Activated CD4-positive, alpha-beta T cell treated with anti-CD3 and anti-CD28 coated beads for 36 hours (primary cell): ENCODE measurements at regions of chr18 and their contacts with region 1.

Region 1: DNA sequence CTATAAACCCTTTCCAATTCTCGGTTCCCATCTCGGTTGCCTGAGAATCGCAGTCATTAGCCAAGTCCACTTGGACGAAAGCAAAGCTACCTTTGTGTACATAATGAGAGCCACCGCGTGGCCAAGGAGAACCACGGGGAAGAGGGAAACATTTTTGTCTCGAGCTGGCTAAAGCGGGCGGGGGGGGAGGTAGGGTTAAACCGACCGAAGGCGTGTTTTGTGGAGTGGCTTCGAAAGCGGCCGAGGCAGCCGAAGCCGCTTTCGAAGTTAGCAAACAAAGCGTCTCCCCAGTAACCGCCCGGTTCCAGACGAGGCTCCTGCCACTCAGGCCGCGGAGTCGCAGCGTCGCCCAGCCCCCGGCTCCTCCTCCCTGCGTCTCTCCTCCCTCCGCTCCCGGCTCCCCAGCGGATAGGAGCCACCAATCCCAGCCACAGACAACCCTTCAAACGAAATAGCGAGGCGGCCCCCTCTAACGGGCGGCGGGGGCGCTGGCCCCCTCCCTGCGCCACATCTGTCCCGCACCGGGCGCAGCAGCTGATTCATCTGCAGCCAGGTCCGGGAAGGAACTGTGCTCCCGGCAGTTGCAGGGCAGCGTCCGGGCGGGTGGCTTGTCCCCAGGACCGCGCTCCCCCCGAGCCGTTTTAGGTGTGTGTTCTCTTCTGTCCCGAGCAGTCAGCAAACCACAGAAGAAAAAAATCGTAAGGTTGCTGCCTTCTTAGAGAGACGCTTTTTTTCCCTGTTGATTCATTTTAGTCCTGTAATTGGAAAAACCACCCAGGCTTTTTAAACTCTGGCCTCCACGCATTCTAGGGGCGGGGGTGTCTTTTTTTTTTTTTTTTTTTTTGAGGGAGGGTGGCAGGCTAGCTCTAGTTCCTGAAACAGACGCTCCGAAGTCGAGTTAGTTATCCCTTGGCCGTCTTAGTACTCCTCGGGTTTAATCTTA is 1.8 kb upstream of the TGIF1 start:
- DNase-seq: peak; percentile 94
- ATAC-seq: peak; percentile 69
- H3K4me3 Mint-ChIP-seq: peak overlapping the region; percentile 94
- H3K27ac Mint-ChIP-seq: peak overlapping the region; percentile 97
- H3K4me1 Mint-ChIP-seq: peaks cover 26% of the 10 kb centered on the region
- H3K27me3 Mint-ChIP-seq: no peaks in the 10 kb centered on the region

Region 2: DNA sequence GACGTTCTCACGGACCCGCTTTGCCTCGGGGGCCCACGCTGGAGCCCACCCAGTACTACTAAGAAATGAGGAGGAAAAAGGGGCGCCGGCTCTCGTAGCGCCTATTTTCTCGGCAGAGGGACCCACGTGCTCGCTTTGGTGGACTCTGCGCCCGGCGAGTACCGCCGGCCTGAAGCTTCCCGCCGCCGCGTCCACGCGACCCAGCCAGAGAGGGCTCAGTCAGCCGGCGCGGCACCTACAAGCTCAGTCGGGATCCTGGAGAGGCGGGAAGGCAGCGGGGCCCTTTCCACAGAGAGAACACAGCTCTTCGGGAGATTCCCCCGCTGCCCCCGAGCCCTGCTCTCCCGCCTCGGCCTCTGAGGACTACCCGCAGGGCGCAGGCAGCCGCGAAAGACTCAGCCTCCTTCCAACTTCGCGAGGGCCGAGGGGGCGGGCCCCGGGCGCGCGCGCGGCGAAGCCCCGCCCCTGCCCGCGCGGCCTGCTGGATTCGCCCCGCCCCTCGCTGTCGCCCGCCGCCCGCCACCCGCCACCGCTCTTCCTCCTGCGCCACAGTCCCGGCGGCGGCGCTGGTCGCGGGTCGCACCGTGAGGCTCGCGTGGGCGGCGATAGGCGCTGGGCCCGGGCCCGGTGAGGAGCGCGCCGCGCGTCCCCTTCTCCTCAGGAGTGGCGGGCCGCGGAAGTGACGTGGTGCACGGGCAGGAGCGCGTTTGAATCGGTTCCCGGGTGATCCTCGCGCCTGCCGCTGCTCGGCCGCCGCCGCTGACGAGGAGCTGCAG is 792.8 kb before region 1 on chr18 and contains the start of gene SMCHD1:
- CTCF ChIA-PET with region 1: interaction called, 3 read pairs
- POLR2A ChIA-PET with region 1: no interaction called
- intact Hi-C with region 1: loop called in 1 of 2 experiments (anchors 5 kb)
- DNase-seq: peak; percentile 97
- ATAC-seq: peak; percentile 78
- H3K4me3 Mint-ChIP-seq: peak within 1 kb of the TSS; percentile 95
- H3K27ac Mint-ChIP-seq: peak within 1 kb of the TSS; percentile 96
- H3K4me1 Mint-ChIP-seq: peaks cover 31% of the 10 kb centered on the region
- H3K27me3 Mint-ChIP-seq: no peaks in the 10 kb centered on the region
- total RNA-seq, gene SMCHD1: 89.5 to 121 TPM

Region 3: DNA sequence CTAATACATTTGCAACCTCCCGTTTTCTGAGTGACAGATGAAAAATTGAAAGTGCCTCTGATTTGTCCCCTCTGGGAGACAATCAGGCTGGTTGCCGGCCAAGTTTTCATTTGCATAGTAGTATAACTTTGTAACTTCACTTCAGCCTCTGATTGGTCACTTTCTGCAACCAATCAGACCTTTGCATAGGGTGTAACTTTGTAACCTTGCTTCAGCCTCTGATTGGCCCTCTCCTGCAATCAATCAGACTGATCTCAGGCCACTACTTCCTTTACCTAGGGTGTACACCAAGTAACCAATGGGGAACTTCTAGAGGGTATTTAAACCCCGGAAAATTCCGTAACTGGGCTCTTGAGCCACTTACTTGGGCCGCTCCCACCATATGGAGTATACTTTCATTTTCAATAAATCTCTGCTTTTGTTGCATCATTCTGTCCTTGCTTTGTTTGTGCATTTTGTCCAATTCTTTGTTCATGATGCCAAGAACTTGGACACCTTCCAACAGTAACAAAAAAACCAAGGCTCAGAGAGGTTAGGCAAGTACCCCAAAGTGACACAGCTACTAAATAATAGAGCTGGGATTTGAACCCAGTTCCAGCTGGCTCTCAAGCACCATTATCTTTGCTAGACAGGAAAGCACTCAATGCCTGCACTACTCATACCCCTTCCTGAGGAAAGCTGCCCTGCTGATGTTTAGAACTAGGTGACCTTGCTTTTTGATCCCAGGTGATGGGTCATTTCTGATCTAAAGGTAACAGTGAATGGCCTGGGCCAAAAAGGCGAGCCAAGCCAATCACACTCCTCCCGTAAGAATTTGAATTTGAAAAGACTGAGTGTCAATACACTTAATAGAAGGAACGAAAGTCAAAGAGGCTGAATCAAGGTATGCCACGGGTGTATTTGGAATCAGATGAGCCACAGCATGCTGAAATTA is 217.5 kb before region 1 on chr18:
- CTCF ChIA-PET with region 1: no interaction called
- POLR2A ChIA-PET with region 1: no interaction called
- intact Hi-C with region 1: no loop called
- DNase-seq: no peak
- ATAC-seq: peak; percentile 33
- H3K4me3 Mint-ChIP-seq: no peak overlapping the region
- H3K27ac Mint-ChIP-seq: no peak overlapping the region
- H3K4me1 Mint-ChIP-seq: peaks cover 2% of the 10 kb centered on the region
- H3K27me3 Mint-ChIP-seq: no peaks in the 10 kb centered on the region

Region 4: GRCh38 chr18:3261371-3262246 is 186.6 kb before region 1 on chr18 and contains the start of gene MYL12B:
- CTCF ChIA-PET with region 1: no interaction called
- POLR2A ChIA-PET with region 1: no interaction called
- intact Hi-C with region 1: loop called (anchors 1 to 5 kb)
- DNase-seq: peak; percentile 88
- ATAC-seq: peak; percentile 77
- H3K4me3 Mint-ChIP-seq: peak within 1 kb of the TSS; percentile 88
- H3K27ac Mint-ChIP-seq: peak within 1 kb of the TSS; percentile 96
- H3K4me1 Mint-ChIP-seq: peaks cover 59% of the 10 kb centered on the region
- H3K27me3 Mint-ChIP-seq: no peaks in the 10 kb centered on the region
- total RNA-seq, gene MYL12B: 282 to 301 TPM

Region 5: GRCh38 chr18:3321133-3321812 is 126.9 kb before region 1 on chr18:
- CTCF ChIA-PET with region 1: interaction called, 5 read pairs
- POLR2A ChIA-PET with region 1: no interaction called
- intact Hi-C with region 1: loop called (anchors 5 kb)
- DNase-seq: peak; percentile 54
- ATAC-seq: peak; percentile 38
- H3K4me3 Mint-ChIP-seq: no peak overlapping the region
- H3K27ac Mint-ChIP-seq: no peak overlapping the region
- H3K4me1 Mint-ChIP-seq: peaks cover 23% of the 10 kb centered on the region
- H3K27me3 Mint-ChIP-seq: peaks cover 9% of the 10 kb centered on the region

Region 6: DNA sequence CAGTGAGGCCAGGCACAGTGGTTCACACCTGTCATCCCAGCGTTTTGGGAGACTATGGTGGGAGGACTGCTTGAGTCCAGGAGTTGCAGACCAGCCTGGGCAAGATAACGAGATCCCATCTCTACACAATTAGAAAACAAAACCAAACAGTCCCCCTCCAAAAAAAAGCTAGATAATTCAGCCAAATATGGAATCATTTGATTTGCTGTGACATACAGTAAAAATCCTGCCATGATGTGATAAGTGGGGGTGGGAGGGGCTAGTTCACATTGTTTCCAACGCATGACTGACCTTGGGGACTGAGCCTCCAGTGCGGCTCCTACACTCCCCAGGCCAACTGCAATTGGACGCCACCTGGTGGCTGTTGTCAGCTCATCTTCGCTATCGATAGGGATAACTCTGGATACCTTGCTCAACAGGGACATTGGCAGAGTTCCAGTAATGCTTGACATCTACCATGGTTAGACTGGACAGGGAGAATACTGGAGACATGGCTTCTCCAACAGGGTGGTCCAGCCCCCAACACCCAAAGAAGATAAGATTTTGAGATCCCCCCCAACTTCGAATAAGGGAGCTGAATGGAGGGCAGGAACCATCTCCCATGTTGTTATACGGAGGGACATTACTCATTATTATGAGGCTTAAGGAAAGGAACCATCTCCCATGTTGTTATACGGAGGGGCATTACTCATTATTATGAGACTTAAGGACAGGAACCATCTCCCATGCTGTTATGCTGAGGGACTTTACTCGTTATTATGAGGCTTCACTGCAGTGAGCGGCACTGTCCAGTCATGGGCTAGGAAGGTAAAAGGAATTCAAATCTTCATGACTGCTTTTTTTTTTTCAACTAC is 137.7 kb after region 1 on chr18:
- CTCF ChIA-PET with region 1: interaction called, 8 read pairs
- POLR2A ChIA-PET with region 1: interaction called, 5 read pairs
- intact Hi-C with region 1: loop called in 1 of 2 experiments (anchors 1 kb)
- DNase-seq: peak; percentile 88
- ATAC-seq: peak; percentile 72
- H3K4me3 Mint-ChIP-seq: no peak overlapping the region
- H3K27ac Mint-ChIP-seq: peak overlapping the region; percentile 59
- H3K4me1 Mint-ChIP-seq: peaks cover 46% of the 10 kb centered on the region
- H3K27me3 Mint-ChIP-seq: no peaks in the 10 kb centered on the region

Region 7: DNA sequence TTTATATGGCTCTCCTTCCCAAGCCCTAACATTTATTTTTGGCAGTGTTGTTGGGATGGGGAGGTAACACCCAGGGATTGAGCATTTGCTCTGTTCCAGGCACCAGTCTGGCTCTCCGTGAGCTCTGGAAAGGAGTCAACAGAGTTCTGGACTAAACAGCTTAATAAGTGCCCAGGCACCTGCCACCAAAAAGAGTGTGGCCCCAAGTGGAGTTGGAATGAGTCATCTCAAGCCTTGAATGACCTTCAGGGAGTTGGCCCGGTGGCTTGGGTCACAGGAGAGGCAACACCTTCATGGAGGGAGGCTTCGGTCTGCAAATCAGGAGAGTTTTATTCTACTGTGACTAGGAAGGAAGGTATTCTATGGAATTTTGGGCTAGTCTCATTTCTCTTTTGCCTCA is 803.7 kb after region 1 on chr18:
- CTCF ChIA-PET with region 1: no interaction called
- POLR2A ChIA-PET with region 1: no interaction called
- intact Hi-C with region 1: no loop called
- DNase-seq: no peak
- ATAC-seq: no peak
- H3K4me3 Mint-ChIP-seq: no peak overlapping the region
- H3K27ac Mint-ChIP-seq: no peak overlapping the region
- H3K4me1 Mint-ChIP-seq: no peaks in the 10 kb centered on the region
- H3K27me3 Mint-ChIP-seq: no peaks in the 10 kb centered on the region

Region 8: DNA sequence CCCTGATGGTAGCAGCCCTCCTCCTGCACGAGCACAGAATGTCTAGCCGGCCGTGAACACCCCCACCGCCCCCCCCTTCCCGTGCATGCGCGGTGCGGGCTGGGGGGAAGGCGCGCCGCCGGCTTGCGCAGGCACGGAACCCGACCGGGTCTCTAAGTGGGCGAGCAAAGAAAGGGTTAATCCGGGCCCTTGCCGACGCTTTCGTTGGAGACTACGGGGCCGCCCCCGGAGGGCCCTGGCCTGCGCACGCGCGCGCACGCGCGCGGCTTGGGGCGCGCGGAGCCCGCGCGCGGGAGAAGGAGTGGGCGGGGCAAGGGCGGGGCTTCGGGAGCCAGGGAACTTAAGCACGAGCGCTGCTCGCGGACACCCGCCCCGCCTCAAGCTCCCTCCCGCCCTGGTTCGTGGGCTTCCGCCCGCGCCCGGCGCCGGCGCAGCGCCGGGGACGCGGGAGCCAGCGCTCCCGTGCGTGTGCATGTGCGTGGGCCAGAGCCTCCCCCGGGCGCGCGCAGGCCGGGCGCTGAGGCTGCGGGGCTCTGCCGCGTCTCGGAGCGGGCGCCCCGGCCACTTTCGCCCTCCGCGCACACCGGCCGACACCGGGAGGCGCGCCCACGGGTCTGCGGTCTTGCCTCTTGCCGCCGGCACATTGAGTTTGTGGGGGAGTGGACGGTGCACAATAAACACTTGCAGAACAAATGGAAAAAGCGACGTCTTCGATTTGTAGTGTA is 1848.0 kb after region 1 on chr18:
- CTCF ChIA-PET with region 1: no interaction called
- POLR2A ChIA-PET with region 1: no interaction called
- intact Hi-C with region 1: loop called in 1 of 2 experiments (anchors 5 kb)
- DNase-seq: peak; percentile 96
- ATAC-seq: peak; percentile 64
- H3K4me3 Mint-ChIP-seq: peak overlapping the region; percentile 89
- H3K27ac Mint-ChIP-seq: peak overlapping the region; percentile 98
- H3K4me1 Mint-ChIP-seq: peaks cover 34% of the 10 kb centered on the region
- H3K27me3 Mint-ChIP-seq: peaks cover under 1% of the 10 kb centered on the region